CD8-positive, alpha-beta T cell (primary cell): ENCODE measurements at regions of chr4 and their contacts with region 1.

Region 1: DNA sequence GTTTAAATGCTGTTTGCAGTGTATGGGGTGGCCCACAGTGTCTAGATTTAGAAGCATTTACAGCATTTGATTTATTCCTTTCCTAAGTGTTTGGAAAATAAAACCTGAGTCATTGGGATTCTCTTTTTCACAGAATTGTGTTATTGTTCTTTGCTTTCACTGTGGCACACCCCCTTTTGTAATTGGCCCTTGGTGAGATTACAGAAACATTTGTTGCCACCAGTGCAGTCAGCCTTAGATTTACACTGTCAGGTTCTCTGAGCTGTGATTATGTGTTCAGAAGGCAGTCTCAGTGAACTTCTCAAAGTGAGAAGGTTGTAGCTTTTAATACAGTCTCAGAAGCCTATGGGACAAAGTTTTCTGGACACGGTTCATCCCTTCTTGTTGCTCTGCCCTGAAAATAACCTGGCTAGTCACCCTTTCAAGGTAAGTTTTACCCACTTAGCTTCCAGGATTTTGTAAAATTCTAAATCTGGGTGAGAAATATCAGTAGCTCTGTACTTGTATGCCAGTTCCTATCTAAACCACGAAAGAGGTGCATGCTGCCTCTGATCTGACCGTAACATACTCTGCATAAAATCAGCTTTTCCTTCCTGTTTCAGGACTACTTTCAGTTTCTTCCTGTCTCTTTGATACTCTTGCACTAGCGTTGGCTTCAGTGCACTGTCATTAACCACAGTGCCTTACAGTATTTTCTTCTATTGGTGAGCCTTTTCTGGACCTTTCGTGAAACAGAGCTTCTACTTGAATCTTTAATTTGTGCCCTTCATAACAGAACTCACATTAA is 12.6 kb downstream of the RUFY3 start:
- DNase-seq: peak in 7 of 9 experiments; percentile 16 to 84 (median 45)
- ATAC-seq: peak; percentile 88
- H3K4me3 ChIP-seq: peak overlapping the region; percentile 40
- H3K4me3 Mint-ChIP-seq: peak overlapping the region; percentile 72
- H3K27ac ChIP-seq: peak overlapping the region; percentile 55 to 77
- H3K27ac Mint-ChIP-seq: peak overlapping the region; percentile 81
- H3K4me1 ChIP-seq: peaks cover 45% of the 10 kb centered on the region
- H3K4me1 Mint-ChIP-seq: peaks cover 45% of the 10 kb centered on the region
- H3K27me3 ChIP-seq: no peaks in the 10 kb centered on the region
- H3K27me3 Mint-ChIP-seq: no peaks in the 10 kb centered on the region
- CTCF ChIP-seq: no peak

Region 2: GRCh38 chr4:69748176-69748575 is 986.2 kb before region 1 on chr4:
- CTCF ChIA-PET with region 1: no interaction called
- POLR2A ChIA-PET with region 1: no interaction called
- intact Hi-C with region 1: no loop called
- DNase-seq: no peak
- ATAC-seq: no peak
- H3K4me3 ChIP-seq: no peak overlapping the region
- H3K4me3 Mint-ChIP-seq: no peak overlapping the region
- H3K27ac ChIP-seq: no peak overlapping the region
- H3K27ac Mint-ChIP-seq: no peak overlapping the region
- H3K4me1 ChIP-seq: no peaks in the 10 kb centered on the region
- H3K4me1 Mint-ChIP-seq: peaks cover 5% of the 10 kb centered on the region
- H3K27me3 ChIP-seq: no peaks in the 10 kb centered on the region
- H3K27me3 Mint-ChIP-seq: no peaks in the 10 kb centered on the region
- CTCF ChIP-seq: no peak

Region 3: DNA sequence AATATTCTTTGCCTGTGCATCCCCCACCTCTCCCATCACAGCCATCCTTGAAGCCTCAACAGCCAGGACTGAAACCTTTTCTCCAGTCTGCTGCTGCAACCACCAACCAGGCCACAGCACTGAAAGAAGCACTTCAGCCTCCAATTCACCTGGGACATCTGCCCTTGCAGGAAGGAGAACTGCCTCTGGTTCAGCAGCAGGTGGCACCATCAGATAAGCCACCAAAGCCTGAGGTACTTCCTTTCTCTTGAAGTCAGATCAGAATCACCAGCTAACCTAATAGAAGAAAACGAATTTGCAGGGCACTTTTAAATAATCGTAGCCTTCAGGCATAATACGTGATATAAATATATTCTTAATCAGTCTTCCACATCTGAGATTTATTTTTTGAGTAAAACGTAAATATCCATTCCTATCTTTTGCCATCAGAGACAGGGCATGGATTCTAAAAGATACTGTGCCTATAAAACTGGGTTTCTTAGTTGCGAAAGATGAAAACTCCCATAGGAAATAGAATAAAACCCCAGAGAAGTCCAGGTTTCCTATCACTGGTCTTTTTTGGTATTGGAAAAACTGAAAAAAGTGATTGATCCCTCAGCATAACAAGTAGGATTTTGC is 132.8 kb before region 1 on chr4:
- CTCF ChIA-PET with region 1: interaction called, 4 read pairs
- POLR2A ChIA-PET with region 1: no interaction called
- intact Hi-C with region 1: loop called in 1 of 2 experiments (anchors 5 kb)
- DNase-seq: peak; percentile 34 to 79 (median 61)
- ATAC-seq: peak; percentile 77
- H3K4me3 ChIP-seq: no peak overlapping the region
- H3K4me3 Mint-ChIP-seq: no peak overlapping the region
- H3K27ac ChIP-seq: no peak overlapping the region
- H3K27ac Mint-ChIP-seq: no peak overlapping the region
- H3K4me1 ChIP-seq: peaks cover 6% of the 10 kb centered on the region
- H3K4me1 Mint-ChIP-seq: no peaks in the 10 kb centered on the region
- H3K27me3 ChIP-seq: no peaks in the 10 kb centered on the region
- H3K27me3 Mint-ChIP-seq: peaks cover 4% of the 10 kb centered on the region
- CTCF ChIP-seq: peak; percentile 90

Region 4: GRCh38 chr4:70687821-70688794 is 46.3 kb before region 1 on chr4 and contains the start of gene UTP3:
- CTCF ChIA-PET with region 1: interaction called, 12 read pairs
- POLR2A ChIA-PET with region 1: interaction called, 12 read pairs
- intact Hi-C with region 1: loop called (anchors 1 kb)
- DNase-seq: peak; percentile 84 to 98 (median 93)
- ATAC-seq: peak; percentile 89
- H3K4me3 ChIP-seq: peak within 1 kb of the TSS; percentile 78 to 84
- H3K4me3 Mint-ChIP-seq: peak within 1 kb of the TSS; percentile 98
- H3K27ac ChIP-seq: peak within 1 kb of the TSS; percentile 85 to 92
- H3K27ac Mint-ChIP-seq: peak within 1 kb of the TSS; percentile 99
- H3K4me1 ChIP-seq: peaks cover 21% of the 10 kb centered on the region
- H3K4me1 Mint-ChIP-seq: peaks cover 44% of the 10 kb centered on the region
- H3K27me3 ChIP-seq: no peaks in the 10 kb centered on the region
- H3K27me3 Mint-ChIP-seq: no peaks in the 10 kb centered on the region
- CTCF ChIP-seq: peak; percentile 96
- total RNA-seq, gene UTP3: 21.6 to 23.1 TPM

Region 5: GRCh38 chr4:70721747-70722146 is 12.6 kb before region 1 on chr4 and contains the start of gene RUFY3:
- CTCF ChIA-PET with region 1: interaction called, 7 read pairs
- POLR2A ChIA-PET with region 1: interaction called, 29 read pairs
- intact Hi-C with region 1: loop called in 1 of 2 experiments (anchors 1 kb)
- DNase-seq: no peak
- ATAC-seq: no peak
- H3K4me3 ChIP-seq: no peak within 1 kb of the TSS
- H3K4me3 Mint-ChIP-seq: peak within 1 kb of the TSS; percentile 42
- H3K27ac ChIP-seq: peak within 1 kb of the TSS; percentile 6 to 18
- H3K27ac Mint-ChIP-seq: peak within 1 kb of the TSS; percentile 80
- H3K4me1 ChIP-seq: peaks cover 19% of the 10 kb centered on the region
- H3K4me1 Mint-ChIP-seq: peaks cover 28% of the 10 kb centered on the region
- H3K27me3 ChIP-seq: no peaks in the 10 kb centered on the region
- H3K27me3 Mint-ChIP-seq: no peaks in the 10 kb centered on the region
- CTCF ChIP-seq: no peak
- total RNA-seq, gene RUFY3: 18.4 to 26.5 TPM

Region 6: GRCh38 chr4:70783096-70783495 is 48.7 kb after region 1 on chr4:
- CTCF ChIA-PET with region 1: no interaction called
- POLR2A ChIA-PET with region 1: no interaction called
- intact Hi-C with region 1: loop called in 1 of 2 experiments (anchors 5 kb)
- DNase-seq: no peak
- ATAC-seq: no peak
- H3K4me3 ChIP-seq: no peak overlapping the region
- H3K4me3 Mint-ChIP-seq: no peak overlapping the region
- H3K27ac ChIP-seq: no peak overlapping the region
- H3K27ac Mint-ChIP-seq: no peak overlapping the region
- H3K4me1 ChIP-seq: no peaks in the 10 kb centered on the region
- H3K4me1 Mint-ChIP-seq: no peaks in the 10 kb centered on the region
- H3K27me3 ChIP-seq: no peaks in the 10 kb centered on the region
- H3K27me3 Mint-ChIP-seq: no peaks in the 10 kb centered on the region
- CTCF ChIP-seq: no peak

Region 7: GRCh38 chr4:70839589-70840093 is 105.3 kb after region 1 on chr4 and contains the start of gene GRSF1:
- CTCF ChIA-PET with region 1: interaction called, 4 read pairs
- POLR2A ChIA-PET with region 1: interaction called, 16 read pairs
- intact Hi-C with region 1: loop called (anchors 1 to 5 kb)
- DNase-seq: peak; percentile 90 to 97 (median 95)
- ATAC-seq: peak; percentile 94
- H3K4me3 ChIP-seq: peak within 1 kb of the TSS; percentile 65 to 80
- H3K4me3 Mint-ChIP-seq: peak within 1 kb of the TSS; percentile 97
- H3K27ac ChIP-seq: peak within 1 kb of the TSS; percentile 80
- H3K27ac Mint-ChIP-seq: peak within 1 kb of the TSS; percentile 97
- H3K4me1 ChIP-seq: peaks cover 29% of the 10 kb centered on the region
- H3K4me1 Mint-ChIP-seq: peaks cover 31% of the 10 kb centered on the region
- H3K27me3 ChIP-seq: no peaks in the 10 kb centered on the region
- H3K27me3 Mint-ChIP-seq: no peaks in the 10 kb centered on the region
- CTCF ChIP-seq: no peak
- total RNA-seq, gene GRSF1: 32.1 to 35.7 TPM

Region 8: DNA sequence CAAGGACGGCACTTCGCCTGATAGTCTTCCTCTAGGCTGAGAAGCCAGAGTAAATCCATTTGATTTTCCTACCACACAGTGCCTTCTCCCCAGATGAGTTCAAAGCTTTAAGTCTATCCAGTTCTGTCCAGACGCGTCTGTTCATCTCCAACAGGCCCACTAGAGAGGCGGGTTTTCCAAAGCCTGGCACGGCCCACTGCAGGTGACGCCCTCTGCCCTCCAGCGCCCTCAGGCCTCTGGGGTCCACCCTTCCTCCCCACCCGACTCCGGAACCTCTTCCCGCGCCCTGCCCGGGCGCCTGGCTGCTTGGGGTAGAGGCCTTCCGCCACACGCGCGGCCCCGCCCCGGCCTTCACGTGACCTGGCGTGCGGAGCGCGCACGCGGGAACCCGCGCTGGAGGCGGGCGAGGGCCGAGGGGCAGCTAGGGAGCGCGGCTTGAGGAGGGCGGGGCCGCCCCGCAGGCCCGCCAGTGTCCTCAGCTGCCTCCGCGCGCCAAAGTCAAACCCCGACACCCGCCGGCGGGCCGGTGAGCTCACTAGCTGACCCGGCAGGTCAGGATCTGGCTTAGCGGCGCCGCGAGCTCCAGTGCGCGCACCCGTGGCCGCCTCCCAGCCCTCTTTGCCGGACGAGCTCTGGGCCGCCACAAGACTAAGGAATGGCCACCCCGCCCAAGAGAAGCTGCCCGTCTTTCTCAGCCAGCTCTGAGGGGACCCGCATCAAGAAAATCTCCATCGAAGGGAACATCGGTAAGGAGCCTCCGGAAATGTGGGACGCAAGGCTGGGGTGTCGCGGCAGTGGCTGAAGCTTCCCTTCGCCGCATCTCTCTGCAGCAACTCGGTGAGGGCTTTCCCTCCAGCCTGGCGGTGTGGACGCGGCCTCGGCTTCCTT is 259.1 kb after region 1 on chr4 and contains the start of gene DCK:
- CTCF ChIA-PET with region 1: interaction called, 3 read pairs
- POLR2A ChIA-PET with region 1: no interaction called
- intact Hi-C with region 1: loop called in 1 of 2 experiments (anchors 10 kb)
- DNase-seq: peak; percentile 65 to 93 (median 82)
- ATAC-seq: peak; percentile 79
- H3K4me3 ChIP-seq: peak within 1 kb of the TSS; percentile 81 to 99
- H3K4me3 Mint-ChIP-seq: peak within 1 kb of the TSS; percentile 95
- H3K27ac ChIP-seq: peak within 1 kb of the TSS; percentile 71 to 88
- H3K27ac Mint-ChIP-seq: peak within 1 kb of the TSS; percentile 94
- H3K4me1 ChIP-seq: peaks cover 29% of the 10 kb centered on the region
- H3K4me1 Mint-ChIP-seq: peaks cover 54% of the 10 kb centered on the region
- H3K27me3 ChIP-seq: no peaks in the 10 kb centered on the region
- H3K27me3 Mint-ChIP-seq: no peaks in the 10 kb centered on the region
- CTCF ChIP-seq: no peak
- total RNA-seq, gene DCK: 18.7 TPM